Cardiac septum (tissue), 1 donor: ENCODE measurements at regions of chr5 and their contacts with region 1.

Region 1: GRCh38 chr5:32613050-32613672 is 27.8 kb downstream of the SUB1 start:
- DNase-seq: peak; percentile 87

Region 2: GRCh38 chr5:32489791-32490582 is 123.2 kb before region 1 on chr5:
- intact Hi-C with region 1: loop called (anchors 1 kb)
- DNase-seq: peak; percentile 84

Region 3: GRCh38 chr5:32551865-32552264 is 61.3 kb before region 1 on chr5:
- intact Hi-C with region 1: no loop called
- DNase-seq: no peak